ENCODE measurements at regions of chr14 and their contacts with region 1.

Region 1: DNA sequence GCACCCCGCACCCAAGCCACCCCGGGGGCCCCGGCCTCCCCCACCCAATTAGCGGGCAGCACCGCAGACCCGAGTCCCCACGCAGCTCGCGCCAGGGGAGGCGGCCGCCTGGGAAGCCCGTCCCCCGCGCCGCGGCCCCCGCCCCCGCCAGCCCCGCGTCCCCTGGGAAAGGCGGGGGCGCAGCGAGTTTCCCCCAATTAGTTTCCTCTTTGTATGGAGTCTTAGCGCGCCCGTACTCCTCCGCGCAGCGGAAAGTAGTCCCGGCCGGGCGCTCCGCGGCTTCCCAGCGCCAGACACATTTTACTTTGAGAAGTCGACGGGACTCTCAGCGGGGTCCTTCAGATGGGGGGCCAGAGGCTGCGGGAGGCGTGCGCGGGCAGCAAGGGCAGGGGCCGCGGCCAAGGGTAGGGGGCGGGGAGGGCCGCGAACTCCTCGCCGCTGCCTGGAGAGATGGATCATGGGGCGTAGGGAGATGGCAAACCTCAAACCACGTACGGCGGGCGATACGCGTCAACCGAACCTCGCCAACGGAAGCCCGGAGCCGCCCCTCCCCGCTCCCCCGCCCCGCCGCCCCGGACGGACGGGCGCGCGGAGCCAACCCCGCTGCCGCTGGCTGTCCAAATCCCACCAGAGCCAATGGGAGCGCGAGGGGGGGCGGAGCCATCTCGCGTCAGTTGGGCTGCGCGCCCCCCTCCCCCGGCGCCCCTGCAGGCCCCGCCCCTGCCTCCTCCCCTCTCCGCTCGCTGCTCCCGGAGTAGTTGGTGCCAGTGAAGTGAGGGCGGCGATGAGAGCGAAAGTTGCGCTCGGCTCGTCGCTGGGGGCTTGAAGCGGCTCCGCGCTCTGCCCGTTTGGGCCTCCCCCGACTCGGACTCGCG is at the start of gene RCOR1:
- DNase-seq: peak; percentile 98 to 99 (median 99)
- H3K4me3 ChIP-seq: peak within 1 kb of the TSS; percentile 75
- H3K27ac ChIP-seq: peak within 1 kb of the TSS; percentile 97 to 98
- H3K4me1 ChIP-seq: peaks cover 7% of the 10 kb centered on the region
- H3K27me3 ChIP-seq: no peaks in the 10 kb centered on the region
- CTCF ChIP-seq: no peak
- EP300 ChIP-seq: no peak
- POLR2A ChIP-seq: peak; percentile 33
- total RNA-seq, gene RCOR1: 8.1 to 22.3 (median 18.6) TPM

Region 2: GRCh38 chr14:101854366-101854765 is 737.8 kb before region 1 on chr14:
- intact Hi-C with region 1: no loop called
- DNase-seq: no peak
- H3K4me3 ChIP-seq: no peak overlapping the region
- H3K27ac ChIP-seq: no peak overlapping the region
- H3K4me1 ChIP-seq: peaks cover 11% of the 10 kb centered on the region
- H3K27me3 ChIP-seq: no peaks in the 10 kb centered on the region
- CTCF ChIP-seq: no peak
- EP300 ChIP-seq: no peak
- POLR2A ChIP-seq: no peak

Region 3: DNA sequence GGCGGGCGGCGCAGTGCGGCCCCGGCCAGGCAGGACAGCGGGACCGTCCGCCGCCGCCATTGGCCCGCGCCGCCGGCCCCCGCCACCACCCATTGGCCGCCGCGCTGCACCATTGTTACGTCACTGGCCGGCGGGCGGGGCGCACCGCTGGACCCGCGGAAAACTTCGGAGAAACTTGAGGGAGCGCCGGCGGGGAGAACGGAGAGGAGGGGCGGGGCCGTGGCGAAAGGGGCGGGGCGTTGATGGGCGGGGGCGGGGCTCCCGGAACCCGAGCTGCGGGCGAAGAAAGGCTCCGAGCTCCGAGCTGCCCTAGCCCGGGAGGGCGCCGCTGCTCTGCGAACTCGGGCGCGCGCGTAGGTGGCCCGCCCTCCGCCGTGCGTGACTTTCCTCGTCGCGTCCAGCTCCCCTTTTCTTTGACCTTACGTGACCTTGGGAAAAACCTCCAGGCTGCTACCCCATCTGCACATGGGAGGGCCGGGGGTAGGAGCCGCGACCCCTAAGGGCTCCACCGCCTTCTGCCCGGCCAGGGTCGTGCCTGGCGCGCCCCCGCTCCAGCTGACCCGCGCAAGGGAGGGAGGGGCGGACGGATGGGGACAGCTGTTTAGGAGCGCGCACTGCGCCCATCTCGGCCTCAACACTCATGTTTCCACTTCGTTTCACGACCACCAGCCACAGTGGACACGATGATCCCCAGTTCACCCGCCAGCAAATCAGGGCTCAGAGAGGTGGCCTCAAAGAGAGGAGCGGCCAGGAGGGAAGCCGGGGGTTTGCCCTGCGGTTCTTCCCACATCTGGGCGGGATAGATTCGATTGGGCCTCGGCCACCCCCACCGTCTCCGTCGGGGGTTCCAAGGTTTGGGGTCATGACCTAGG is 82.1 kb before region 1 on chr14 and contains the start of gene ANKRD9:
- intact Hi-C with region 1: loop called in 1 of 4 experiments (anchors 2 kb)
- DNase-seq: peak; percentile 94 to 97 (median 96)
- H3K4me3 ChIP-seq: peak within 1 kb of the TSS; percentile 70
- H3K27ac ChIP-seq: peak within 1 kb of the TSS; percentile 82 to 86
- H3K4me1 ChIP-seq: no peaks in the 10 kb centered on the region
- H3K27me3 ChIP-seq: no peaks in the 10 kb centered on the region
- CTCF ChIP-seq: no peak
- EP300 ChIP-seq: no peak
- POLR2A ChIP-seq: no peak
- total RNA-seq, gene ANKRD9: 13.7 to 48.1 (median 20.9) TPM

Region 4: DNA sequence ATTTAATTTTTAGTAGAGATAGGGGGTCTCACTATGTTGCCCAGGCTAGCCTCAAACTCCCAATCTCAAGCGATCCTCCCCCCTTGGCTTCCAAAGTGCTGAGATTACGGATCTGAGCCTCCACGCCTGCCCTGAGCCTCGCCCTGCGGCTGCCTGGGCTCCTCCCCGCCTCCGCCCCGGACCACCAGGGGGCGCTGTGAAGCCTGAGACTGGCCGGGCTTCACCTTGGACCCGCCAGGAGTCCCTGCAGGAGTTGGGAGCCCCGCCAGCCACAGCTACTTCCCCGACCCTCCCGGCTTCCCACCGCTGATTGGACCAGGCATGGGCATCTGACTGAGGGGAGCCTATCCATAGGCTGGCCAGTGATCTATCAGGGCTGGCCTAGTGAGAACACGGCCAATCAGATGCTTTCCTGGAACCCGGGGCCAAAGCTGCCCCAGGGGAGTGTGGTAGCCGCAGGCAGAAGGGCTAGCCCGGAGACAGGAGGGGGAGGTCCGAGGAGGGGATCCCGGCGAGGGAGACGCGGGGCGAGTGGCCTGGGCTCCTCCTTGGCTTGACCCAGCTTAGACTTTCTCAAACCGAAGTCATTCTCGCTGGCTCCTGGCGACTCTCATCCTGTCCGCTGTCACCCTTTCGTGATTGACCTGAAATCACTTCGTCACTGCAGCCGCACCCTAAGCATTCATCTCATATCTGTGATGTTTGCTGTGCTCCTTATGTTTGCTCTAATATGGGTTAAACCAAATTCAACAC is 67.5 kb before region 1 on chr14:
- intact Hi-C with region 1: loop called in 1 of 4 experiments (anchors 2 kb)
- DNase-seq: peak; percentile 96 to 99 (median 97)
- H3K4me3 ChIP-seq: peak overlapping the region; percentile 58
- H3K27ac ChIP-seq: peak overlapping the region in 1 of 2 donors; percentile 43
- H3K4me1 ChIP-seq: peaks cover 1% of the 10 kb centered on the region
- H3K27me3 ChIP-seq: no peaks in the 10 kb centered on the region
- CTCF ChIP-seq: peak; percentile 90 to 97 (median 91)
- EP300 ChIP-seq: no peak
- POLR2A ChIP-seq: no peak

Measured in ovary (tissue), 10 donors.